K562 (cell line): ENCODE measurements at regions of chr1 and their contacts with region 1.

Region 1: DNA sequence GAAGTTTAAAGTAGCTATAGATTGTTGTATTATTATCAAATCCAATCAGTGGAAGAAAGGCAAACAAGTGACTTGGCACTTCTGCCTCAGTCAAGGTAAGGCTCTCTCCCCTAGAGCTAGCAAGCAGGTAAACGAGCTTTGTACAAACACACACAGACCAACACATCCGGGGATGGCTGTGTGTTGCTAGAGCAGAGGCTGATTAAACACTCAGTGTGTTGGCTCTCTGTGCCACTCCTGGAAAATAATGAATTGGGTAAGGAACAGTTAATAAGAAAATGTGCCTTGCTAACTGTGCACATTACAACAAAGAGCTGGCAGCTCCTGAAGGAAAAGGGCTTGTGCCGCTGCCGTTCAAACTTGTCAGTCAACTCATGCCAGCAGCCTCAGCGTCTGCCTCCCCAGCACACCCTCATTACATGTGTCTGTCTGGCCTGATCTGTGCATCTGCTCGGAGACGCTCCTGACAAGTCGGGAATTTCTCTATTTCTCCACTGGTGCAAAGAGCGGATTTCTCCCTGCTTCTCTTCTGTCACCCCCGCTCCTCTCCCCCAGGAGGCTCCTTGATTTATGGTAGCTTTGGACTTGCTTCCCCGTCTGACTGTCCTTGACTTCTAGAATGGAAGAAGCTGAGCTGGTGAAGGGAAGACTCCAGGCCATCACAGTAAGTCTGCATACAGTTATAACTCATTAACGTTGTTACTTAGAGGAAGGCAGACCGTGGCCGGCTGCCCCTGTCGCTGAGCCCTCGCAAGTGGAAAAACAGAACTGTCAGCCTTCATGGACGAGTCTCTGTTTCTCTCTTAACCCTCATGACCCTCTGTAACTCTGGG is at the start of gene PALMD:
- DNase-seq: peak; percentile 23 to 68 (median 41)
- ATAC-seq: peak; percentile 73
- H3K4me3 ChIP-seq: peak within 1 kb of the TSS; percentile 31
- H3K27ac ChIP-seq: peak within 1 kb of the TSS; percentile 63
- H3K4me1 ChIP-seq: peaks cover 6 to 38% of the 10 kb centered on the region in 2 experiments; a peak in 4 of 5 replicates
- H3K27me3 ChIP-seq: no peaks in the 10 kb centered on the region
- CTCF ChIP-seq: no peak
- EP300 ChIP-seq: no peak
- POLR2A ChIP-seq: peak; percentile 56
- RAD21 ChIP-seq: no peak
- polyA plus RNA-seq, gene PALMD: 2.7 to 6.5 TPM

Region 2: GRCh38 chr1:99441299-99442095 is 204.4 kb before region 1 on chr1:
- CTCF ChIA-PET with region 1: no interaction called
- POLR2A ChIA-PET with region 1: no interaction called
- in situ Hi-C with region 1: no loop called
- intact Hi-C with region 1: no loop called
- DNase-seq: no peak
- ATAC-seq: no peak
- H3K4me3 ChIP-seq: no peak overlapping the region
- H3K27ac ChIP-seq: no peak overlapping the region
- H3K4me1 ChIP-seq: no peaks in the 10 kb centered on the region
- H3K27me3 ChIP-seq: no peaks in the 10 kb centered on the region
- CTCF ChIP-seq: no peak
- EP300 ChIP-seq: no peak
- POLR2A ChIP-seq: no peak
- RAD21 ChIP-seq: no peak

Region 3: GRCh38 chr1:99481391-99481996 is 164.4 kb before region 1 on chr1:
- CTCF ChIA-PET with region 1: no interaction called
- POLR2A ChIA-PET with region 1: no interaction called
- in situ Hi-C with region 1: no loop called
- intact Hi-C with region 1: loop called (anchors 5 kb)
- DNase-seq: peak; percentile 35 to 69 (median 38)
- ATAC-seq: peak; percentile 89
- H3K4me3 ChIP-seq: no peak overlapping the region
- H3K27ac ChIP-seq: no peak overlapping the region
- H3K4me1 ChIP-seq: no peaks in the 10 kb centered on the region
- H3K27me3 ChIP-seq: no peaks in the 10 kb centered on the region
- CTCF ChIP-seq: peak; percentile 48 to 79 (median 50); a peak in 4 of 6 replicates
- EP300 ChIP-seq: no peak
- POLR2A ChIP-seq: no peak
- RAD21 ChIP-seq: peak; percentile 89

Region 4: GRCh38 chr1:99533909-99534637 is 111.8 kb before region 1 on chr1:
- CTCF ChIA-PET with region 1: interaction called, 3 read pairs
- POLR2A ChIA-PET with region 1: no interaction called
- in situ Hi-C with region 1: no loop called
- intact Hi-C with region 1: loop called (anchors 5 kb)
- DNase-seq: no peak
- ATAC-seq: no peak; the same call in 2 of the 3 replicates
- H3K4me3 ChIP-seq: no peak overlapping the region
- H3K27ac ChIP-seq: peak overlapping the region; percentile 48; the same call in 1 of the 3 replicates
- H3K4me1 ChIP-seq: peaks cover 0 to 9% of the 10 kb centered on the region in 2 experiments; a peak in 2 of 5 replicates
- H3K27me3 ChIP-seq: no peaks in the 10 kb centered on the region
- CTCF ChIP-seq: no peak
- EP300 ChIP-seq: no peak
- POLR2A ChIP-seq: no peak
- RAD21 ChIP-seq: no peak

Region 5: GRCh38 chr1:99599678-99600175 is 46.2 kb before region 1 on chr1:
- CTCF ChIA-PET with region 1: no interaction called
- POLR2A ChIA-PET with region 1: no interaction called
- in situ Hi-C with region 1: no loop called
- intact Hi-C with region 1: loop called (anchors 2 kb)
- DNase-seq: peak; percentile 47 to 96 (median 70)
- ATAC-seq: peak; percentile 93
- H3K4me3 ChIP-seq: no peak overlapping the region; the same call in 1 of the 2 replicates
- H3K27ac ChIP-seq: peak overlapping the region; percentile 75
- H3K4me1 ChIP-seq: peaks cover 6 to 31% of the 10 kb centered on the region in 2 experiments; a peak in 4 of 5 replicates
- H3K27me3 ChIP-seq: no peaks in the 10 kb centered on the region
- CTCF ChIP-seq: no peak
- EP300 ChIP-seq: peak; percentile 97
- POLR2A ChIP-seq: no peak
- RAD21 ChIP-seq: peak; percentile 23 to 37; a peak in 2 of 4 replicates

Region 6: GRCh38 chr1:99634971-99635624 is 10.8 kb before region 1 on chr1:
- CTCF ChIA-PET with region 1: no interaction called
- POLR2A ChIA-PET with region 1: interaction called, 10 read pairs
- in situ Hi-C with region 1: no loop called
- intact Hi-C with region 1: no loop called
- DNase-seq: no peak
- ATAC-seq: no peak
- H3K4me3 ChIP-seq: no peak overlapping the region
- H3K27ac ChIP-seq: no peak overlapping the region
- H3K4me1 ChIP-seq: peaks cover 0 to 1% of the 10 kb centered on the region in 2 experiments; a peak in 3 of 5 replicates
- H3K27me3 ChIP-seq: no peaks in the 10 kb centered on the region
- CTCF ChIP-seq: no peak
- EP300 ChIP-seq: no peak
- POLR2A ChIP-seq: no peak
- RAD21 ChIP-seq: no peak

Region 7: GRCh38 chr1:99662581-99663208 is 16.8 kb after region 1 on chr1:
- CTCF ChIA-PET with region 1: no interaction called
- POLR2A ChIA-PET with region 1: interaction called, 10 read pairs
- in situ Hi-C with region 1: no loop called
- intact Hi-C with region 1: no loop called
- DNase-seq: no peak
- ATAC-seq: no peak
- H3K4me3 ChIP-seq: no peak overlapping the region
- H3K27ac ChIP-seq: no peak overlapping the region
- H3K4me1 ChIP-seq: no peaks in the 10 kb centered on the region
- H3K27me3 ChIP-seq: no peaks in the 10 kb centered on the region
- CTCF ChIP-seq: no peak
- EP300 ChIP-seq: no peak
- POLR2A ChIP-seq: no peak
- RAD21 ChIP-seq: no peak

Region 8: GRCh38 chr1:99766378-99766800 is 120.5 kb after region 1 on chr1 and contains the start of gene FRRS1:
- CTCF ChIA-PET with region 1: no interaction called
- POLR2A ChIA-PET with region 1: no interaction called
- in situ Hi-C with region 1: no loop called
- intact Hi-C with region 1: loop called (anchors 5 kb)
- DNase-seq: peak; percentile 53 to 94 (median 64)
- ATAC-seq: peak; percentile 75
- H3K4me3 ChIP-seq: peak within 1 kb of the TSS; percentile 78
- H3K27ac ChIP-seq: peak within 1 kb of the TSS; percentile 99
- H3K4me1 ChIP-seq: peaks cover 14 to 38% of the 10 kb centered on the region in 2 experiments
- H3K27me3 ChIP-seq: no peaks in the 10 kb centered on the region
- CTCF ChIP-seq: peak in 1 of 3 experiments; percentile 7; a peak in 1 of 6 replicates
- EP300 ChIP-seq: peak; percentile 45; the same call in 1 of the 2 replicates
- POLR2A ChIP-seq: peak; percentile 80
- RAD21 ChIP-seq: no peak
- polyA plus RNA-seq, gene FRRS1: 0.87 to 1.9 TPM